Dendritic cell treated with granulocyte-macrophage colony-stimulating factor and Interleukin-4, amounts not matched to agents 40 ng/mL and 50 ng/mL, for 4 days (primary cell): ENCODE measurements at regions of chr16 and their contacts with region 1.

Region 1: GRCh38 chr16:31712064-31712540 is 161.5 kb upstream of the ZNF267 start:
- H3K4me3 Mint-ChIP-seq: no peak overlapping the region
- H3K27ac Mint-ChIP-seq: no peak overlapping the region
- H3K4me1 Mint-ChIP-seq: peaks cover 25% of the 10 kb centered on the region
- H3K27me3 Mint-ChIP-seq: peaks cover 4% of the 10 kb centered on the region

Region 2: GRCh38 chr16:31696968-31697743 is 14.9 kb before region 1 on chr16:
- intact Hi-C with region 1: loop called (anchors 1 kb)
- H3K4me3 Mint-ChIP-seq: no peak overlapping the region
- H3K27ac Mint-ChIP-seq: no peak overlapping the region
- H3K4me1 Mint-ChIP-seq: peaks cover 23% of the 10 kb centered on the region
- H3K27me3 Mint-ChIP-seq: peaks cover 40% of the 10 kb centered on the region

Region 3: GRCh38 chr16:31727553-31727952 is 15.5 kb after region 1 on chr16:
- intact Hi-C with region 1: no loop called
- H3K4me3 Mint-ChIP-seq: no peak overlapping the region
- H3K27ac Mint-ChIP-seq: no peak overlapping the region
- H3K4me1 Mint-ChIP-seq: peaks cover 9% of the 10 kb centered on the region
- H3K27me3 Mint-ChIP-seq: no peaks in the 10 kb centered on the region